ENCODE measurements at regions of chr3 and their contacts with region 1.

Region 1: DNA sequence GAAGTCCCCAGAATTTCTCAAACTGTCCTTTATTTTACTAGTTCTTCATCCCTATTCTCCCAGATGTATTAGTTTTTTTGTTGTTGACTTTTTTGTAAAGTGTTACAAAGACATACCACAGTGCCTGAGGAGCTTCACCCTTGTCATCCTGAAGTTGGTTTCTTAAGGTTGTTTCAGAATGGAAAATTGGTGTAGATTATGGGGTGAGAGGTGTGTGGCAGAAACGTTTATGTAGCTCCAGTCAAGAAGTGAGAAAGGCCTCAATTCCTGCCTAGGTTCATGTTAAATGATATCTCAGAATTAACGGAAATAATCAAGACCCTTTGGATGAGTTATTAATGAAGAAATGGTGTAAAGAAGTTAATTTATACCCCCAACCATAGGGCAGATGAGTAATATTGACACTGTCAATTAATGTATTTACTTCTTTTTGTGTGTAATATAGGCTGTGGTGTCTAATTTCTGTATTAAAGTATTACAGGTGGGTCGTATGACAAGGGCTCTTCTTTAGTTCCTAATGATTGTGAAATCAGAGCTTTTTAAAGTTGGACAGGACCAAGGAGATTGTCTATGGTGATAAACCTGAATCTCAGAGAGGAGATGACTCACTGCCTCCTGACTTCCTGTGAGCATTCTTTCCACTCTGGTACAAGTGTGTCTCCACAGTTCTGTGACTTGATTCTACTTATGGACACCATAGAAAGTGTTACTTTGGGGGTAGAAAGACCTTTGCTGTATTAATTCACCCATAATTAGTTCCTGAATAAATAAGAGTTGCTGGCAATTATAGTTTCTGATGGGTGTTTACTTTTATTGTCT is 7.0 kb downstream of the EDEM1 start:
- DNase-seq: peak; percentile 87
- H3K4me3 ChIP-seq: peak overlapping the region in 1 of 3 experiments; percentile 42
- H3K27ac ChIP-seq: peak overlapping the region; percentile 75
- H3K4me1 ChIP-seq: peaks cover 41% of the 10 kb centered on the region
- H3K27me3 ChIP-seq: no peaks in the 10 kb centered on the region
- CTCF ChIP-seq: no peak
- POLR2A ChIP-seq: no peak

Region 2: DNA sequence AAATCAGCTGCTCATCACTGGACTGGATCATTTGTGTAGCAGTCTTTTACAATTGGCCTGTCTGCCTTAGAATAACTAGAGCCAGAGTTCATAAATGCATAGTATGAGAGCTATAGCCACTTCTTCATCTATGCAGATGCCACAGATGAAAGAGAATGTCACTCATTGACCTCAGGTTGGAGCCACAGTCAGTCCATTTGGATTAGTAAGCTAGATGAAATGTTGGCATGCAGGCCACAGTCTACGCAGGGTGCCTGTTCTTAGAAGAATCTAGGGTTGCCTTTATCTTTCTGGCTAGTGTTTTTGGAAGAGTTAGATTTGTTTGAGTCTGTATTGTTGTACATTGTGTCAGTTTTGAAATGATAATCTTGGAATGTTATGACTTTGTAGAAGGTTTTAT is 32.4 kb before region 1 on chr3:
- CTCF ChIA-PET with region 1: no interaction called
- POLR2A ChIA-PET with region 1: no interaction called
- dilution Hi-C with region 1: no loop called
- intact Hi-C with region 1: no loop called
- DNase-seq: no peak
- H3K4me3 ChIP-seq: no peak overlapping the region
- H3K27ac ChIP-seq: no peak overlapping the region
- H3K4me1 ChIP-seq: peaks cover 9% of the 10 kb centered on the region
- H3K27me3 ChIP-seq: no peaks in the 10 kb centered on the region
- CTCF ChIP-seq: no peak
- POLR2A ChIP-seq: no peak

Region 3: DNA sequence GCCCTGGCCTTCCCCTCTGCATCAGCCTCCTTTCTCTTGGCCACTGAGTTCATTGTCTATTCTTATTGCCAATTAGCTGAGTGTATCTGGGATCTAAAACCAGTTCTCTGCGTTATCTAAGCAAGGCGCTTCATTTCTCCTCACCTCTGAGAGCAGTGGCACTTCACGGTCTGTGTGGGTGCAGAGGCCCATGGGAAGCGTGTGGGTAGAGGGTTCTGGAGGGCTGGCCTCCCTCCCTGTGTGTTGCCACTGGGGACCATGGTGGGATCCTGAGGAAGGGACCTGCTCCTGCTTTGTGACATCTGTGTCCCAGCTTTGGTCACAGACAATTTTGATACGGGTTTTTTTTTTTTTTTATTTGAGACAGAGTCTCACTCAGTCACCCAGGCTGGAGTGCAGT is 25.6 kb after region 1 on chr3:
- CTCF ChIA-PET with region 1: no interaction called
- POLR2A ChIA-PET with region 1: no interaction called
- dilution Hi-C with region 1: no loop called
- intact Hi-C with region 1: no loop called
- DNase-seq: no peak
- H3K4me3 ChIP-seq: no peak overlapping the region
- H3K27ac ChIP-seq: no peak overlapping the region
- H3K4me1 ChIP-seq: no peaks in the 10 kb centered on the region
- H3K27me3 ChIP-seq: no peaks in the 10 kb centered on the region
- CTCF ChIP-seq: no peak
- POLR2A ChIP-seq: no peak

Region 4: GRCh38 chr3:5264087-5264600 is 69.6 kb after region 1 on chr3:
- CTCF ChIA-PET with region 1: no interaction called
- POLR2A ChIA-PET with region 1: no interaction called
- dilution Hi-C with region 1: no loop called
- intact Hi-C with region 1: no loop called
- DNase-seq: no peak
- H3K4me3 ChIP-seq: no peak overlapping the region
- H3K27ac ChIP-seq: no peak overlapping the region
- H3K4me1 ChIP-seq: no peaks in the 10 kb centered on the region
- H3K27me3 ChIP-seq: no peaks in the 10 kb centered on the region
- CTCF ChIP-seq: no peak
- POLR2A ChIP-seq: no peak

Region 5: GRCh38 chr3:6449099-6449498 is 1254.5 kb after region 1 on chr3:
- CTCF ChIA-PET with region 1: no interaction called
- POLR2A ChIA-PET with region 1: no interaction called
- dilution Hi-C with region 1: no loop called
- intact Hi-C with region 1: loop called (anchors 2 kb)
- DNase-seq: peak; percentile 87
- H3K4me3 ChIP-seq: no peak overlapping the region
- H3K27ac ChIP-seq: peak overlapping the region; percentile 76
- H3K4me1 ChIP-seq: peaks cover 40% of the 10 kb centered on the region
- H3K27me3 ChIP-seq: no peaks in the 10 kb centered on the region
- CTCF ChIP-seq: no peak
- POLR2A ChIP-seq: no peak